ENCODE measurements at regions of chr7 and their contacts with region 1.

Region 1: DNA sequence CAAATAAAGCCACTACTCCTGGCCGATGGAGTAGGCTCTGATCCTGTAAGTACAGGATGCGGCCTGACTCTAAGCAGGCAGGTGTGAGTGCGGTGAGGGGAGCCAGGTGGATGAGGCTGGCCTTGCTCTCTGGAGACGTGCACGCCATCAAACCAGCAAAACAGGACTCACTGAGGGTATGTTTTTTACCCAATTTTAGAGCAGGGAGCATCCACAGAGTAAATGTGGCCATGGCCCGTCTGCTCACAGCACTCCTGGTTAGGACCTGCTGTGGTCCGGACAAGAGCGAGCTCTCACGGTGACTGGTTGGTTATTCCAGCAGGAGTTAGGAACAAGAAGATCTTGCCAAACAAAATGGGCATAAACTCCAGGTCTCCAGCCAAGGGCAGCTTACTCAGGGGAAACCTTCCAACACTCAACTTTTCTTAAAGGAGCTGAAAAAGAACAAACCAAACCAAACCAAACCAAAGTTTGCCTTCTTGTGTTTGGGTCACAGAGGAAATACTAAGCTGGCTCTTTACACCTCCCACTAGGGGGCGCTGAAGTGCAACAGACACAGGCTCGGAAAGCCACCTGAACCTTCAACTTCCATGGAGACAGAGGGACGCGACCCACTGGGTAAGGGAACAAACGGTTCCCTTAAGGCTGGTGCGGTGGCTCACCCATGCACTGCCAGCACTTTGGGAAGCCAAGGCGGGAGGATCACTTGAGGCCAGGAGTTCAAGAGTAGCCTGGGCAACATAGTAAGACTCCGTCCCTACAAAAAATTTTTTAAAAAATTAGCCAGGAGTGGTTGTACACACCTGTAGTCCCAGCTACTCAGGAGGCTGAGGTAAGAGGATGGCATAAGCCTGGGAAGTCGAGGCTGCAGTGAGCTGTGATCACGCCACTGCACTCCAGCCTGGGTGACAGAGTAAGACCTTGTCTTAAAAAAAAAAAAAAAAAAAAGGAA is 122.4 kb downstream of the CLEC2L start:
- DNase-seq: peak; percentile 85 to 92 (median 88)
- H3K4me3 ChIP-seq: no peak overlapping the region
- H3K27ac ChIP-seq: no peak overlapping the region
- H3K4me1 ChIP-seq: peaks cover 14 to 34% (median 22%) of the 10 kb centered on the region in 4 experiments
- H3K27me3 ChIP-seq: no peaks in the 10 kb centered on the region

Region 2: DNA sequence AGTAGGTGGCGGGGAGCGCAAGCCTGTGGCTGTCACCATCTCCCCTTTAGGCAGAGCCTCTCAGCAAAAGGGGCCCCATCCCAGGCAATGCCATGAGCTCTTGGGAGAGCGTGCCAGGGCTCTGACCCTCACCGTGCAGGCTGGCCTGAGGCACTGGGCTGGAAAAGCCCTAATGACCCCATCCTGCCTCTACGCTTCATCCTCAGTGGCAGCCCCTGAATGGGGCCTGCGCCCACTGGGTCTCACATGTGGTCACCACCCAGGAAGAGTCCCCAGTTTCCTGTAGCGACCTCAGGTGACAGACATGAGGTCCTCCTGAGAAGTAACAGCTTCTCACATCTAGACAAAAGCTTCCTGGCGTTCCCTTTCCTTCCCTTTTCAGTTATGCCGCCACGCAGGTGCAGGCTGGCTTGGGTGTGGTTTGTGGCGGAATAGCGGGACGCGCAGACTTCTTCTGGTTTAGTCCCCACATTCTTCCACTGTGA is 63.1 kb before region 1 on chr7:
- CTCF ChIA-PET with region 1: no interaction called
- POLR2A ChIA-PET with region 1: no interaction called
- DNase-seq: no peak
- H3K4me3 ChIP-seq: no peak overlapping the region
- H3K27ac ChIP-seq: no peak overlapping the region
- H3K4me1 ChIP-seq: peaks cover 4 to 55% (median 11%) of the 10 kb centered on the region in 4 experiments
- H3K27me3 ChIP-seq: no peaks in the 10 kb centered on the region

Region 3: GRCh38 chr7:139602143-139602722 is 43.6 kb before region 1 on chr7:
- CTCF ChIA-PET with region 1: interaction called, 14 read pairs
- POLR2A ChIA-PET with region 1: no interaction called
- DNase-seq: peak; percentile 31 to 68 (median 68)
- H3K4me3 ChIP-seq: no peak overlapping the region
- H3K27ac ChIP-seq: no peak overlapping the region
- H3K4me1 ChIP-seq: peaks cover 0 to 11% (median 7%) of the 10 kb centered on the region in 4 experiments
- H3K27me3 ChIP-seq: no peaks in the 10 kb centered on the region

Region 4: GRCh38 chr7:139620676-139621344 is 25.0 kb before region 1 on chr7:
- CTCF ChIA-PET with region 1: interaction called, 164 read pairs
- POLR2A ChIA-PET with region 1: no interaction called
- DNase-seq: peak in 2 of 3 donors; percentile 53 to 56
- H3K4me3 ChIP-seq: no peak overlapping the region
- H3K27ac ChIP-seq: no peak overlapping the region
- H3K4me1 ChIP-seq: peaks cover 2 to 25% (median 13%) of the 10 kb centered on the region in 4 experiments
- H3K27me3 ChIP-seq: no peaks in the 10 kb centered on the region

Region 5: DNA sequence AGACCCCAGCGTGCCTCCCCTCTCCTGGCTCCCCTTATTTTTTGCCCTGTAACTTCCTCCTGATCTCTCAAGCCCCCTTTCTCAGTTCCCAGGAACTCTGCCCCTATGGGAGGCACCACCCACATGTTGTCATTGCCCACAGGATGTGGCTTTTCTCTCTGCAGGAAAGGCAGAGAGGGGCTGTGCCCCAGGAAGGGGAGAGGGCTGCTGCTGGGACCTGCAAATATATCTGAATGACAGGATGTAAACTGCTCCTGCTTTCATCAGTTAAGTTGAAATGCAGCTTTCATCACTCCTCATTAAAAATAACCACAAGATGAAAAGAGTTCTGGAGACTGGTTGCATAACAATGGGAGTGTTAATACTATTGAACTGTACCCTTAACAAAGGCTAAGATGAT is 19.0 kb before region 1 on chr7:
- CTCF ChIA-PET with region 1: interaction called, 164 read pairs
- POLR2A ChIA-PET with region 1: no interaction called
- DNase-seq: peak; percentile 76 to 89 (median 86)
- H3K4me3 ChIP-seq: peak overlapping the region in 2 of 7 experiments; percentile 26 to 40
- H3K27ac ChIP-seq: peak overlapping the region; percentile 48 to 63
- H3K4me1 ChIP-seq: peaks cover 32 to 83% (median 70%) of the 10 kb centered on the region in 4 experiments
- H3K27me3 ChIP-seq: no peaks in the 10 kb centered on the region

Region 6: DNA sequence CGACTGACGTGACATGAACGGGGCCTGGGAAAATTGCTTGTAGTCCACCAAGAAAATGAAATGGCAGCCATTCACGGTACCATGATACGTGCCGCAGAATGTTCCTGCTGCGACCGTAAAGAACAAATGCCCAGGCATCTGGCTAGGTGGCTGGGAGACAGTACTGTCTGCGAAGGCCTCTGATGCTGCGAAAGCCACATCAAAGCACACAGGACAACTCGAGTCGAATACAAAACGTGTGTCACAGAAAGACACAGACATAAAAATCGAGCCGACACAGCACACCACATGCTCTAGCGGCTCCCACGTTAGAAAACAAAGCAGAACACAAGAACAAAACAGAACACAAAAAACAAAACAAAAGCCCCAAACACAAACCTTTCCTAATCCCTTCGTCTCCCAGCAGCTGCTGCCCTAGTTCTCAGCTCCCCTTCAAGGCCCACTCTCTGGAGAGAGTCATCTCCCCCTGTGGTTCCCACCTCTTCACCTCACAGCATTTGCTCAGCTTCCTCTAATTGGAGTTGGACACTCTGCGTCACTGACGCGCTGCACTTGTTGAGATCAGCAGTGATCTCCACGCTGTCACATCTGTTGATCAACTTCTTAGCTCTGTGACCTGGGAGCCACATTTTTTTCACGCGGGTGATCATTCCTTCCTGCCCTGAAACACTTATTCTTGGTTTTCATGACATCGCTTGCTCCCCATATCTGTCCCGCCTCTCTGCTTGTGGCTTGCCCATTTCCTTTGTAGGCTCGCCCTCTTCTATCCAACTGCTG is 10.1 kb before region 1 on chr7:
- CTCF ChIA-PET with region 1: interaction called, 46 read pairs
- POLR2A ChIA-PET with region 1: interaction called, 3 read pairs
- DNase-seq: peak; percentile 88 to 97 (median 96)
- H3K4me3 ChIP-seq: no peak overlapping the region
- H3K27ac ChIP-seq: no peak overlapping the region
- H3K4me1 ChIP-seq: peaks cover 9 to 60% (median 49%) of the 10 kb centered on the region in 4 experiments
- H3K27me3 ChIP-seq: no peaks in the 10 kb centered on the region

Region 7: DNA sequence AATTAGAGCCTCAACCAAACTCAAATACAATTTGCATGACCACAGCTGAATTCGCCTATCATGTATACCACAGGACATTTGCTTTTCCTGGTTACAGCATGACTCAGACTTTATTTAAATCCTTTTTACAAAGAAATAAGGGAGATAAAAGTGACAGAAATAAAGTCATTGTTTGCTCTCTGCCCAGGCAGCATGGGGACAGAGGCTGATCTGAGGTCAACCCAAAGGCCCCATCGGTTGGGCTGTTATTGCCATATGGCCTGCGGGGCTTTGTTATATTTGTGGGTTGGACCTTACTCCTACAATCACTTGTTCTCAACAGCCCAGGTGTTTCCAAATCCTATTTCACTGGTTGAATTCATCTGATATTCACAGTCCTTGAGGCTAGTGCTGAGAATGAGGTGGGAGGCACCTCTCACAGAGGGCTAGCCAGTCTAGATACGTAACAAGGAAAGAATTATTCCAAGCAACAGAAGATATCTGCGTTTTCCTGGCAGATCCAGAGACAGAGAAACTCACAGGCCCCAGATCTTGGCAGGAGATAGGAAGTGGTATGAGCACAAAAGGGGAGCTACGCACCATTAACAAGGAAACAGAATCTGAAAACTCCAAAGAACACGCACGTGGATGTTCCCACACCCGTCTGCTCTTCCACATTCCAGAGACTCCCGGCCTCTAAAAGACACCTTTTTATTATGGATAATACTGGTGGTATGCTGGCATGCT is 14.6 kb after region 1 on chr7:
- CTCF ChIA-PET with region 1: interaction called, 15 read pairs
- POLR2A ChIA-PET with region 1: no interaction called
- DNase-seq: no peak
- H3K4me3 ChIP-seq: no peak overlapping the region
- H3K27ac ChIP-seq: no peak overlapping the region
- H3K4me1 ChIP-seq: peaks cover 0 to 11% (median 3%) of the 10 kb centered on the region in 4 experiments
- H3K27me3 ChIP-seq: no peaks in the 10 kb centered on the region